ENCODE measurements at regions of chr6 and their contacts with region 1.

Region 1: GRCh38 chr6:142946181-142946923 is 1.4 kb upstream of the HIVEP2 start:
- DNase-seq: peak; percentile 91 to 96
- H3K4me3 ChIP-seq: peak overlapping the region; percentile 89
- H3K27ac ChIP-seq: peak overlapping the region; percentile 90
- H3K4me1 ChIP-seq: peaks cover 36% of the 10 kb centered on the region
- H3K27me3 ChIP-seq: no peaks in the 10 kb centered on the region
- CTCF ChIP-seq: no peak

Region 2: GRCh38 chr6:142474531-142475289 is 471.6 kb before region 1 on chr6:
- CTCF ChIA-PET with region 1: no interaction called
- POLR2A ChIA-PET with region 1: no interaction called
- intact Hi-C with region 1: loop called (anchors 5 kb)
- DNase-seq: peak; percentile 58 to 71
- H3K4me3 ChIP-seq: peak overlapping the region; percentile 38; the same call in 1 of the 2 replicates
- H3K27ac ChIP-seq: no peak overlapping the region
- H3K4me1 ChIP-seq: no peaks in the 10 kb centered on the region
- H3K27me3 ChIP-seq: no peaks in the 10 kb centered on the region
- CTCF ChIP-seq: peak; percentile 91

Region 3: DNA sequence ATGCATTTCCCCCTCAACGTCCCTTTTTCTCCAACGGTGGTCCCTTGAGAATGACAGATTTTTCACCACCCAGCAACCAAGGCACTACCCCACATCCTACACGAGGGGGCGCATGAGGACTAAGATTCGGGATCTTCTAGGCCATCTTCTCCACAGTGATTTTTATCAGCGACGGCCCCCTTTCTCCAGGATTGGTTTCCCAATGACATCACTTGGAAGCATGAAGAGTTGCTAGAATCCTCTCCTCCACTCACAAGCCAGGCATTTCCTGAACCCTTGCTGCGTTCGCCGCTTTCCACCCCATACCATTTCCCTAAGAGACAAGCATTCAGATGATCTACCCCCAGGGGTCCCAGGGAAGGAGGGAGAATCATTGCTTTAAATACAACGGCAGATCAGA is 253.4 kb before region 1 on chr6:
- CTCF ChIA-PET with region 1: no interaction called
- POLR2A ChIA-PET with region 1: no interaction called
- intact Hi-C with region 1: loop called (anchors 1 kb)
- DNase-seq: peak; percentile 37 to 58
- H3K4me3 ChIP-seq: no peak overlapping the region
- H3K27ac ChIP-seq: no peak overlapping the region
- H3K4me1 ChIP-seq: peaks cover 21% of the 10 kb centered on the region; the same call in 1 of the 2 replicates
- H3K27me3 ChIP-seq: no peaks in the 10 kb centered on the region
- CTCF ChIP-seq: peak; percentile 97

Region 4: DNA sequence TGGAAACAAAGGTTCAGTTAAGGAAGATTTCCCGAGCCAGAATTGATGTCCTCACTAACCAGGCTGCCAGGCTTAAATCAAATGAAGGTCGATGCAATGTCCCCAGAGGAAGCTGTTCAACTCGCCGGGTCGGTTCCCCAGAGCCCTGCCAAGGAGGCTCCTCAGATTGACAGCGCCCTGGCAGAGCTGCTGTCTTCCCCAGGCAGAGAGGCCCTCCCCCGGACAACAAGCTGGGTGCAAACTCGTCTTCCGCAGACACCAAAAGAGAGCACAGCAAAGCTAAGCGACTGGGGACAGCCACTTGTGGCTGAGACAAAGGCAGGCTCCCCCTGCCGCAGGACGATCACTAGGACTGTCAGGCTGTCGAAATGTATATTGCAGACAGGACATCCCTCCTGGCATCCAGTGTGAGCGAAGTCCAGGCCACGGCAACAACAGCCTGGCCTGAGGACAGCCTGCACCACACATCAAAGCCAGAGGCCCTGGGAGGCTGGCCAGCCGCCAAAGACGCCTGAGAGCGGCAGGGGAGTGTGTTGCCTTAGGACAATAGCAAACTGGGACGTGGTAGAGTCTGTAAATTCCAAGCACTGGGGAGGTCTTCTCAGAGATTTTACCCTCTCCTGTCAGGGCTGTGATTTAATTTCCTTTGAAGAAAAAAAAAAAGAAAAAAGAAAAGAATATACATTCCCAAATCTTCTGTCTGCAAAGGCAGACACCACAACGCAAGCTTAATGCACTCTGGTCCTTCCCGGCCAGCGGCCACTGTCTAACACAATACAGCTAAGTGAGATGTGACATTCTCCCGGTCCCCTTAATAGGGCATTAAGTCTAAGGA is 100.5 kb before region 1 on chr6:
- CTCF ChIA-PET with region 1: interaction called, 3 read pairs
- POLR2A ChIA-PET with region 1: no interaction called
- intact Hi-C with region 1: loop called (anchors 2 kb)
- DNase-seq: peak; percentile 86
- H3K4me3 ChIP-seq: peak overlapping the region; percentile 51; the same call in 1 of the 2 replicates
- H3K27ac ChIP-seq: peak overlapping the region; percentile 89
- H3K4me1 ChIP-seq: peaks cover 84% of the 10 kb centered on the region
- H3K27me3 ChIP-seq: no peaks in the 10 kb centered on the region
- CTCF ChIP-seq: no peak

Region 5: DNA sequence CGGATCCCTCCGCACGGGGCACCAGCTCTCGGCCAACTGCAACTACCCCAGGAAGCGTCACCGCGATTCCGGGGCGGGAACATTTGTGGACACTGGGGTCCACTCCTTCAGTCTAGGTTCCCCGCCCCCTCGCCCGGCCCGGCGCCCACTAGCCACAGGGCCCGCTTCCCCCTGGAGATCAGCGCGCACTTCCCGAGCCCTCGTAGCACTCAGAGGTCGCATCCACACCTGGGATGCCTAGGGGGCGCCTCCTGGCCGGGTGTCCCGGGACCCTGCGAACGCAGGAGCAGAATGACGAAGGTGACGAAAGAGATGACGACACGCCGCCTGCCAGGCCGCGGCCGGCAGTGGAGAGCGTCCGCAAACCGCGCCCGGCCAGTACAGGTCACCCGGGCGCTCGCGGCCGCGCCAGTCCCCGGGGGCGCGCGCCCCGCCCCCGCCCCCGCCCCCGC is 114.0 kb after region 1 on chr6:
- CTCF ChIA-PET with region 1: no interaction called
- POLR2A ChIA-PET with region 1: no interaction called
- intact Hi-C with region 1: loop called (anchors 1 kb)
- DNase-seq: peak; percentile 75 to 84
- H3K4me3 ChIP-seq: peak overlapping the region; percentile 66
- H3K27ac ChIP-seq: peak overlapping the region; percentile 97
- H3K4me1 ChIP-seq: peaks cover 51% of the 10 kb centered on the region
- H3K27me3 ChIP-seq: no peaks in the 10 kb centered on the region
- CTCF ChIP-seq: no peak; the same call in 1 of the 2 replicates

Region 6: DNA sequence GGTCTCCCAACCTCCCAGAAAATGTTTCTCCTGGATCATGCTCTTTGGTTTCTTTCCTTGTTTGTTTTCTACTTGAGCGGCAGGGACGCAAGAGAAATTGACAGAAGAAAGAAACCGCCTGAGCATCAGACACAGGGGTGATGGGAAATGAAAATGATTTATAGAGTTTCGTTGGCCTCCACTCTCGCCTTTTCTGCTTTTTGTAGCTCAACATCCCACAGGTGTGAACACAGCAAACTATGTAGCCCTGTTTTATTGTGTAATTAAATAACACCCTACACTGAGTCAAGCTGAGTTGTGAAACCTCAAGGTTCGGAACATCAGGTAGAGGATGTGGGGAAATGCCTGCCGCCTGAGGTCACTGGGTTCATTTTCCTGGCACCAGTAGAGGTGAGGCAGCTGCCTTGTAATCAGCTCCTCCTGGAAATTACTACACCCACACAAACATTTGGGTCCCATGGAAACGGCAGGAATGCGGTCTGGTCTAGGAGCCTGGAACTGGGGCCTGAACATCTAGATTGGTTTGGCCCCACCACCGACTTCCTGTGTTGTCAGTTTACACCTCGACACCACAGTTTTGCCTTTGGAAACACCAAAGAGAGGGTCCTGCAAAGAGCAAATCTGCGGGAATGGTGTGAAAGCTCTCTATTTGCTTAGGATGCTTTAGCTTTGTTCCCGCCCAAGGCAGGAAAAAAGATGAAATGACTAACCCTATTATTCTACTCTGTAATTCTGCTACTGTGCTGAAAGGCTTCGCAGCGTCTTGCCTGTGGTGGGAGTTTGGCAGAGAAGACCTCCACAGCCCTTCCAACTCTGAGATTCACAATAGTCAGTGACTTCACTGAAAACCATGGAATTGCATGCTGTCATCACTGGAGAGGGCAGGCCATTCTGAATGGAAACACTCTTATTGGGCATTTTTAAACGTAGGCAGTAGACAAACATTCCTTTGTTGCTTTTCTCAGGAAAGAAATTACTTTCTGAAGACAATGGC is 451.2 kb after region 1 on chr6:
- CTCF ChIA-PET with region 1: no interaction called
- POLR2A ChIA-PET with region 1: no interaction called
- intact Hi-C with region 1: loop called (anchors 1 kb)
- DNase-seq: peak; percentile 91 to 98
- H3K4me3 ChIP-seq: no peak overlapping the region
- H3K27ac ChIP-seq: peak overlapping the region; percentile 90
- H3K4me1 ChIP-seq: peaks cover 70% of the 10 kb centered on the region
- H3K27me3 ChIP-seq: no peaks in the 10 kb centered on the region
- CTCF ChIP-seq: no peak

Region 7: DNA sequence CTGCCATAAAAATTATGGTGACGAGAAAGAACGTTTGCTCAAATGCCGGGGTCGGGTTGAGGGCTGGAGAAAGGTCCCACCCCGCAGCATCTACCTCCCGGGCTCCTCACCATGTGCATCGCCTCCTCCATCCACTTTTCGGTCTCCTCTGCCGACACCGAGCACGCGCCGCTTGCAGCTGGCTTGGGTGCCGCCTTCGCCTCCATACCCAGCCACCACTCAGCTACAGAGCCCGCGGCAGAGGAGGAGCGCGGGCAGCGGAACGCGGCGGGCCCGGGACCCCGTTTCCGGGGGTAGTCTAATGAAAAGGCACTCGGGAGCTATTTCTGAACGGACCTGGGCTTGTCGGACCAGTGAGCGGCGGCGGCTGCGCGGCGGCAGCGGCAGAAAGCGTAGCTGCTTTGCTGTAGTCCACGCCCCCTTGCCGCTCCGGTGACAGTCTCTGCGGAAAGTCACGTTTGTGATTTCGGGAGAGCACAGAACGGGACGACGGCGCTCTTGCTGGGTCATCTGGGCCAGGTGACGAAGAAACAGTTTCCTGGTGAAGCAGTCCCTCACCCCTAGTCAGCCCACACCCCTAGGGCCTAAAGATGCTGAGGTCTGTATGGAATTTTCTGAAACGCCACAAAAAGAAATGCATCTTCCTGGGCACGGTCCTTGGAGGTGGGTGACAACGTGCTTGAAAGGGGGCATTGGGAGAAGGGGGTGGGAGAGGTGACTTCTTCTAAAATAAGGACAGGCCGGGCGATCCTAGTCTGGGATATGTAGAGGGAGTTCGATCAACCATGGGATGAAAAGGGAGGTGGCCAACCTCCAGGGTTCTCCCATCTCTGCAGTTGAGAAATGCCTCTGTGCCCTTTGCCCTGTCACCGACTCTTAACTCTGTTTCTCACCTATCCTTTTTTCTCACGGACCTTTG is 504.4 kb after region 1 on chr6 and contains the starts of genes ADAT2 and PEX3:
- CTCF ChIA-PET with region 1: no interaction called
- POLR2A ChIA-PET with region 1: no interaction called
- intact Hi-C with region 1: loop called (anchors 1 kb)
- DNase-seq: peak; percentile 84 to 94
- H3K4me3 ChIP-seq: peak within 1 kb of the TSS; percentile 77
- H3K27ac ChIP-seq: peak within 1 kb of the TSS; percentile 47
- H3K4me1 ChIP-seq: peaks cover 22% of the 10 kb centered on the region
- H3K27me3 ChIP-seq: no peaks in the 10 kb centered on the region
- CTCF ChIP-seq: no peak
- total RNA-seq, gene ADAT2: 5.5 and 6.0 TPM in 2 replicates
- total RNA-seq, gene PEX3: 18.4 and 20.9 TPM in 2 replicates

Measured in PC-9 (cell line).